Panc1 (cell line): ENCODE measurements at regions of chr6 and their contacts with region 1.

Region 1: GRCh38 chr6:126716826-126717509 is 377.1 kb downstream of the CENPW start:
- DNase-seq: no peak
- ATAC-seq: no peak
- H3K4me3 ChIP-seq: no peak overlapping the region
- H3K27ac ChIP-seq: no peak overlapping the region
- H3K4me1 ChIP-seq: no peaks in the 10 kb centered on the region
- H3K27me3 ChIP-seq: no peaks in the 10 kb centered on the region
- CTCF ChIP-seq: no peak

Region 2: DNA sequence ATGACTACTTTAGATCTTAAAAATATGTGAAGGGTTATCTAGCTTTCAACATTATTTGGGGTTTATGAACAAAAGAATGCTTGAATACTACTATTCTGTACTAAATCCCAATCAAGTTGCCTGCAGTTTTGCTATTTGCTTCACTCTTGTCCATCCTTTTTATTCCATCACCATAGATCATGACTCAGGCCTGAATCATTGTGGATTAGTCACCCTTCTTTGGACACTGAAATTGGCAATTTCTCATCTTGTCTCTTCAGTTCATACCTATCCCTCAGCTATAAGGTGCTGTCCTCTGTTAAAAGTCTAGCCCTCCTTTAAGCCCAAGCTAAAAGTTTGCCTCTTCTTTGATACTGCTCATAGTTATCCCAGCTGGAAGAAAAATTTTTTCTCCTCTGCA is 177.9 kb before region 1 on chr6:
- CTCF ChIA-PET with region 1: no interaction called
- POLR2A ChIA-PET with region 1: no interaction called
- in situ Hi-C with region 1: no loop called
- intact Hi-C with region 1: no loop called
- DNase-seq: peak; percentile 42
- ATAC-seq: no peak
- H3K4me3 ChIP-seq: no peak overlapping the region
- H3K27ac ChIP-seq: no peak overlapping the region
- H3K4me1 ChIP-seq: no peaks in the 10 kb centered on the region
- H3K27me3 ChIP-seq: no peaks in the 10 kb centered on the region
- CTCF ChIP-seq: no peak

Region 3: GRCh38 chr6:126581316-126581715 is 135.7 kb before region 1 on chr6:
- CTCF ChIA-PET with region 1: no interaction called
- POLR2A ChIA-PET with region 1: no interaction called
- in situ Hi-C with region 1: no loop called
- intact Hi-C with region 1: no loop called
- DNase-seq: no peak
- ATAC-seq: no peak
- H3K4me3 ChIP-seq: no peak overlapping the region
- H3K27ac ChIP-seq: no peak overlapping the region
- H3K4me1 ChIP-seq: no peaks in the 10 kb centered on the region
- H3K27me3 ChIP-seq: no peaks in the 10 kb centered on the region
- CTCF ChIP-seq: no peak

Region 4: GRCh38 chr6:126682433-126682832 is 34.5 kb before region 1 on chr6:
- CTCF ChIA-PET with region 1: no interaction called
- POLR2A ChIA-PET with region 1: no interaction called
- in situ Hi-C with region 1: no loop called
- intact Hi-C with region 1: loop called (anchors 1 kb)
- DNase-seq: no peak
- ATAC-seq: no peak
- H3K4me3 ChIP-seq: no peak overlapping the region
- H3K27ac ChIP-seq: no peak overlapping the region
- H3K4me1 ChIP-seq: no peaks in the 10 kb centered on the region
- H3K27me3 ChIP-seq: no peaks in the 10 kb centered on the region
- CTCF ChIP-seq: no peak

Region 5: GRCh38 chr6:126773112-126773805 is 56.3 kb after region 1 on chr6:
- CTCF ChIA-PET with region 1: no interaction called
- POLR2A ChIA-PET with region 1: no interaction called
- in situ Hi-C with region 1: no loop called
- intact Hi-C with region 1: no loop called
- DNase-seq: no peak
- ATAC-seq: no peak
- H3K4me3 ChIP-seq: no peak overlapping the region
- H3K27ac ChIP-seq: no peak overlapping the region
- H3K4me1 ChIP-seq: no peaks in the 10 kb centered on the region
- H3K27me3 ChIP-seq: no peaks in the 10 kb centered on the region
- CTCF ChIP-seq: no peak